ENCODE measurements at regions of chr18 and their contacts with region 1.

Region 1: GRCh38 chr18:58529714-58530354 is 99.1 kb downstream of the ALPK2 start:
- DNase-seq: peak; percentile 87
- ATAC-seq: peak; percentile 48

Region 2: GRCh38 chr18:58599106-58599505 is 69.3 kb after region 1 on chr18:
- intact Hi-C with region 1: no loop called
- DNase-seq: no peak
- ATAC-seq: no peak

Region 3: DNA sequence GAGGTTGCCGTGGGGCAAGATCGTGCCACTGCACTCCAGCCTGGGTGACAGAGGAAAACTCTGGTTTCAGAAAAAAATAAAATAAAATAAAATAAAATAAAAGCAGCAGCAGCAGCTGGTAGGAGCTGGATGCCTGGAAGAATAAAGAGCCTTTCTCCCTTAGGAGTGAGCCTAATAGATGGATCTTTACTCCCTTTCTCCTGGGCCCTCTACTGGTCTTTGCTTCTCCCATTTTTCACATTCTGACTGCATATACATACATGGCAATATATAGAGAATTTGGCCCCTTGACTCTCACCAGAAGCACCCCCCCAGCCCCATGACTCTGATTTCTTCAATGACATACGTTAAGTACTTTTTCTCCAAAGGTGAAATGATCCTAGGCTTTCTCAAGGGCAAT is 131.6 kb after region 1 on chr18:
- intact Hi-C with region 1: loop called (anchors 5 kb)
- DNase-seq: no peak
- ATAC-seq: peak; percentile 50

Region 4: DNA sequence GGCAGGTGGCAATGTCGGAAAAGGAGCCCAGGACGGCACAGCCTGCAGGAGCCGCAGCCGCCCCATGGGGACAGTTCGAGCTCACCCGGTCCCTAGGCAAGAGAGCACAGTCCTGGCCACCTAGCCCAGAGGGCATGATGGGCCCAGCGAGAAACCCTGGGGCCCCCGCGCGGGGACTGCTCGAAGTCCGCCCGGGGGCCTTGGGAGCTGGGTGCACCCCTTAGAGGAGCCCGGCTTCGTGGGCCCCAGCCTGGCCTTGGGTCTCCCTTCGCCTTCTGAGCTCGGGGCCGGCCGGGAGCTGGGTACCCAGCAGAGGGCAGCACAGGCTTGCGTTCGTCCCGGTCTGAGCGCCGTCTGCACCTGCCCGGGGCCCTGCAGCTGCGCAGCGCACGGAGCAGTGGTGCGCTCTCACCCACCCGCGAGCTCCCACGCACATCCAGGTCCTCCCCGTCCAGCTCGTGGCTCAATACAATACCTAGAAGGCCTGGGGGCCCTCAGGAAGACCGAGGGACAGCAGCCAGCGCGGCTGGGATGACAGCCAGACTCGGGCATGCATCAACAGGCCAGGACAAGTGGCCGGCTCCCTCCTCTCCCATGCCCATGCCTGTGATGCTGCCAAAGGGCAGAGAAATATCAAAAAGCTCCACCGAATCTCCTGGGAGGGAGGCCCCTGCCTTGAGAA is 238.6 kb after region 1 on chr18:
- intact Hi-C with region 1: loop called (anchors 2 kb)
- DNase-seq: peak; percentile 84
- ATAC-seq: peak; percentile 91

Region 5: GRCh38 chr18:59070181-59070912 is 540.5 kb after region 1 on chr18:
- intact Hi-C with region 1: loop called (anchors 10 kb)
- DNase-seq: peak; percentile 86
- ATAC-seq: peak; percentile 80